ENCODE measurements at regions of chr19 and their contacts with region 1.

Region 1: DNA sequence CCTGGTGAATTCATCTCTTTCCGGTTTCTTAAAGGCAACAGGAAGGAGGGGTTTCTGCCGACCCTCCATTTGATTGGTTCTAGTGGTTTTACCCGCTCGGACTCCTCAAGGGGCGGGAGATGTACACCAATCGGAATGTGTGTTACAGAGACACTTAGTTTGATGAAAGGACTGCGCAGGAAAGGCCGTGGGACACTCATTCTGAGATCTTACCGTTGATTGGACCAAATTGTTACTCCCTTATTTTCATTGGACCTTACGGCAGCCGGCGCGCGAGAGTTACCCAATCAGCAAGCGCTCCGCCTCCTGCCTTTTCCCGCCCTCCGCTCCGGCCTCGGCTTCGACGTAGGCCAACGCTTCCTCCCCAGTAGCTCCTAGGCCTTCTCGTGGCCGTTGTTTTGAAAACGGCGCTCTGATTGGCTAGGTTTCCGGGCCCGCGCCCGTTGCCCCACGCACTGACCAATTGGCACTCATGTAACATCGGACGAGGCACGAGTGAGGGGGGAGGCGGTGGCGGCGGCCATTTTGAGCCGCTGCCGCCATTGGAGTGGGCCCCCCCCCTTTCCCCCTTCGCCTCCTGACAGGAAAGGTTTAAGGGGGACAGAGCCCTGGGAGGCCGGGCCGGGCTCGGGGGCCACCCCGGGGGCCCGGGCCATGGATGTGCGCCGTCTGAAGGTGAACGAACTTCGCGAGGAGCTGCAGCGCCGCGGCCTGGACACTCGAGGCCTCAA is at the start of gene HNRNPUL1:
- DNase-seq: peak; percentile 99 to 100 (median 100)
- ATAC-seq: peak; percentile 50
- H3K4me3 ChIP-seq: peak within 1 kb of the TSS; percentile 85
- H3K4me3 Mint-ChIP-seq: peak within 1 kb of the TSS; percentile 96
- H3K27ac ChIP-seq: peak within 1 kb of the TSS; percentile 99 to 100
- H3K27ac Mint-ChIP-seq: peak within 1 kb of the TSS; percentile 100
- H3K4me1 ChIP-seq: peaks cover 59% of the 10 kb centered on the region
- H3K4me1 Mint-ChIP-seq: peaks cover 55% of the 10 kb centered on the region
- H3K27me3 ChIP-seq: no peaks in the 10 kb centered on the region
- H3K27me3 Mint-ChIP-seq: peaks cover 5% of the 10 kb centered on the region
- CTCF ChIP-seq: no peak
- total RNA-seq, gene HNRNPUL1: 367 to 388 TPM

Region 2: GRCh38 chr19:40570313-40571004 is 693.6 kb before region 1 on chr19:
- CTCF ChIA-PET with region 1: no interaction called
- POLR2A ChIA-PET with region 1: interaction called, 12 read pairs
- intact Hi-C with region 1: no loop called
- DNase-seq: peak; percentile 88 to 100 (median 96)
- ATAC-seq: peak; percentile 86
- H3K4me3 ChIP-seq: peak overlapping the region; percentile 40
- H3K4me3 Mint-ChIP-seq: peak overlapping the region; percentile 80
- H3K27ac ChIP-seq: peak overlapping the region in 1 of 2 donors; percentile 9
- H3K27ac Mint-ChIP-seq: peak overlapping the region; percentile 22
- H3K4me1 ChIP-seq: peaks cover 35% of the 10 kb centered on the region
- H3K4me1 Mint-ChIP-seq: peaks cover 27% of the 10 kb centered on the region
- H3K27me3 ChIP-seq: peaks cover 21 to 22% of the 10 kb centered on the region in 2 experiments
- H3K27me3 Mint-ChIP-seq: peaks cover 34% of the 10 kb centered on the region
- CTCF ChIP-seq: no peak

Region 3: GRCh38 chr19:40777937-40778705 is 485.9 kb before region 1 on chr19 and contains the start of gene RAB4B:
- CTCF ChIA-PET with region 1: no interaction called
- POLR2A ChIA-PET with region 1: interaction called, 23 read pairs
- intact Hi-C with region 1: no loop called
- DNase-seq: peak; percentile 99 to 100 (median 100)
- ATAC-seq: peak; percentile 84
- H3K4me3 ChIP-seq: peak within 1 kb of the TSS; percentile 69
- H3K4me3 Mint-ChIP-seq: peak within 1 kb of the TSS; percentile 95
- H3K27ac ChIP-seq: peak within 1 kb of the TSS; percentile 93 to 95
- H3K27ac Mint-ChIP-seq: peak within 1 kb of the TSS; percentile 93
- H3K4me1 ChIP-seq: peaks cover 23% of the 10 kb centered on the region
- H3K4me1 Mint-ChIP-seq: peaks cover 36% of the 10 kb centered on the region
- H3K27me3 ChIP-seq: no peaks in the 10 kb centered on the region
- H3K27me3 Mint-ChIP-seq: no peaks in the 10 kb centered on the region
- CTCF ChIP-seq: no peak
- total RNA-seq, gene RAB4B: 26.6 to 26.9 TPM

Region 4: DNA sequence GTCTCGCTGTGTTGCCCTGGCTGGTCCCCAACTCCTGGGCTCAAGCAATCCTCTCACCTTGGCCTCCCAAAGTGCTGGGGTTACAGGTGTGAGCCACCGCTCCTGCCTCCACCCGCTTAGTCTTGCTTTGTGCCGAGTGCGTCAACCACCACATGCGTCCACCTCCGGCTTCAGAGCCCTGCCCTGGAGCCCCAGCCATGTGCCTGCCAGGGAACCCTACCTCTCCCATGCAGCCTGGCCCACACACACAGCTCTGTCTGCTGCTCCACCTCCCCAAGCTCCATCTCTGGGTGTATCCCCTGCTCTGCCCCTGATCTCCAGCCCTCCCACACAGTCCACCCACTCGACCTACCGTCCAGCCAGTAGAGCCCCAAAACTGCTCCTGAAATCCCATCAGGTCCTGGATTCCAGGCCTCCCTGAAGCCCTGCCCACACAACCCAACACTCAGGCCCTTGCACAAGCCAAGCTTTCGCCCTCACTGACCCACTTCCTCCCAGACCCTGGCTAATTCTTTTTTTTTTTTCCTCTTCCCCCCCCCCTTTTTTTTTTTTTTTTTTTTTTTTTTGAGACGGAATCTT is 140.2 kb before region 1 on chr19:
- CTCF ChIA-PET with region 1: interaction called, 9 read pairs
- POLR2A ChIA-PET with region 1: no interaction called
- intact Hi-C with region 1: loop called (anchors 1 to 5 kb)
- DNase-seq: no peak
- ATAC-seq: no peak
- H3K4me3 ChIP-seq: no peak overlapping the region
- H3K4me3 Mint-ChIP-seq: no peak overlapping the region
- H3K27ac ChIP-seq: no peak overlapping the region
- H3K27ac Mint-ChIP-seq: peak overlapping the region; percentile 53
- H3K4me1 ChIP-seq: peaks cover 40% of the 10 kb centered on the region
- H3K4me1 Mint-ChIP-seq: peaks cover 36% of the 10 kb centered on the region
- H3K27me3 ChIP-seq: no peaks in the 10 kb centered on the region
- H3K27me3 Mint-ChIP-seq: no peaks in the 10 kb centered on the region
- CTCF ChIP-seq: no peak

Region 5: DNA sequence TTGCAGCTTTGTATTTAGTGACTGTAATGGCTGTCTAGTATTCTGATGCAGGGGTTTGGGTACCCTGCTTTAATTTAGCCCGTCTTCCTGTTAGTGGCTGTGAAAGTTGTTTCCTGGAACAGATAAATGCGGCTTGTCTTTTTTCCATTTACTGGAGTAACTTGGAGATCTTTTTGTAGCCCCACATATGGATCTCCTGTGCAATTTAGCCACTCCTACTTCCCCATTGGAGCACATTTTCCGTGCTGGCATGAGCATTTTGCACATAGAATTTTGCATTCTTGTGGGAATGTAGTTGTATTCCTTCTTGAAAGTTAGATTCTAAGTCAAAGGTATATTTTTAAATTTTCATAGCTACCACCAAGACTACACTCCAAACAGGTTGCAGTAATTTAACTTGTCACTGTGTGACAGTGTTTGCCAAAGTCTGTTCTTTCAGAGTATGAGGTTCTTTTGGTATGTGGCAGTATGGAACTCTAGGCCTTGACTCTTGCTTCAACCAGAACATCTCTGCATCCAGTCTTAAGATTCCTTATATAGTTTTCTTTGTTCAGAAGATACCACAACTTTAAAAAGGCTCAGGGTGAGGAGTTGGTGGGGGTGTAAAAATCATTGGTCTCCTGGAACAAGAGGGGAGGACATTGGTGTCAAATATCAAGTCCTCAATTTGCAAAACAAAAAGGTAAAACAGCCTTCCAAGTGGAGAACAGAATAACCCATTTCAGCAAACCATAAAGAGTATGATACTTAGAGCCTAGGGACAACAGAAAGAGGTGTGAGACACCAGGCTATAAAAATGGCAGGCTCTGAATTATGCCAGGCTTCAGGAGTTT is 24.9 kb after region 1 on chr19:
- CTCF ChIA-PET with region 1: interaction called, 4 read pairs
- POLR2A ChIA-PET with region 1: interaction called, 16 read pairs
- intact Hi-C with region 1: no loop called
- DNase-seq: peak in 1 of 14 experiments; percentile 33
- ATAC-seq: peak; percentile 38
- H3K4me3 ChIP-seq: no peak overlapping the region
- H3K4me3 Mint-ChIP-seq: no peak overlapping the region
- H3K27ac ChIP-seq: no peak overlapping the region
- H3K27ac Mint-ChIP-seq: no peak overlapping the region
- H3K4me1 ChIP-seq: peaks cover 2% of the 10 kb centered on the region
- H3K4me1 Mint-ChIP-seq: peaks cover 11% of the 10 kb centered on the region
- H3K27me3 ChIP-seq: no peaks in the 10 kb centered on the region
- H3K27me3 Mint-ChIP-seq: no peaks in the 10 kb centered on the region
- CTCF ChIP-seq: no peak

Region 6: GRCh38 chr19:41363753-41364523 is 99.9 kb after region 1 on chr19 and contains the start of gene B9D2:
- CTCF ChIA-PET with region 1: interaction called, 9 read pairs
- POLR2A ChIA-PET with region 1: interaction called, 108 read pairs
- intact Hi-C with region 1: no loop called
- DNase-seq: peak; percentile 97 to 99 (median 98)
- ATAC-seq: peak; percentile 92
- H3K4me3 ChIP-seq: peak within 1 kb of the TSS; percentile 66
- H3K4me3 Mint-ChIP-seq: peak within 1 kb of the TSS; percentile 94
- H3K27ac ChIP-seq: peak within 1 kb of the TSS; percentile 98 to 99
- H3K27ac Mint-ChIP-seq: peak within 1 kb of the TSS; percentile 98
- H3K4me1 ChIP-seq: peaks cover 35% of the 10 kb centered on the region
- H3K4me1 Mint-ChIP-seq: peaks cover 39% of the 10 kb centered on the region
- H3K27me3 ChIP-seq: no peaks in the 10 kb centered on the region
- H3K27me3 Mint-ChIP-seq: no peaks in the 10 kb centered on the region
- CTCF ChIP-seq: no peak
- total RNA-seq, gene B9D2: 21.1 to 26.8 TPM

Region 7: GRCh38 chr19:41548954-41549688 is 285.1 kb after region 1 on chr19:
- CTCF ChIA-PET with region 1: no interaction called
- POLR2A ChIA-PET with region 1: interaction called, 15 read pairs
- intact Hi-C with region 1: loop called in 1 of 2 experiments (anchors 2 kb)
- DNase-seq: peak in 13 of 14 experiments; percentile 57 to 91 (median 74)
- ATAC-seq: peak; percentile 63
- H3K4me3 ChIP-seq: peak overlapping the region; percentile 74
- H3K4me3 Mint-ChIP-seq: peak overlapping the region; percentile 97
- H3K27ac ChIP-seq: peak overlapping the region; percentile 62 to 67
- H3K27ac Mint-ChIP-seq: peak overlapping the region; percentile 82
- H3K4me1 ChIP-seq: peaks cover 53% of the 10 kb centered on the region
- H3K4me1 Mint-ChIP-seq: peaks cover 70% of the 10 kb centered on the region
- H3K27me3 ChIP-seq: no peaks in the 10 kb centered on the region
- H3K27me3 Mint-ChIP-seq: no peaks in the 10 kb centered on the region
- CTCF ChIP-seq: no peak